ENCODE measurements at regions of chr6 and their contacts with region 1.

Region 1: DNA sequence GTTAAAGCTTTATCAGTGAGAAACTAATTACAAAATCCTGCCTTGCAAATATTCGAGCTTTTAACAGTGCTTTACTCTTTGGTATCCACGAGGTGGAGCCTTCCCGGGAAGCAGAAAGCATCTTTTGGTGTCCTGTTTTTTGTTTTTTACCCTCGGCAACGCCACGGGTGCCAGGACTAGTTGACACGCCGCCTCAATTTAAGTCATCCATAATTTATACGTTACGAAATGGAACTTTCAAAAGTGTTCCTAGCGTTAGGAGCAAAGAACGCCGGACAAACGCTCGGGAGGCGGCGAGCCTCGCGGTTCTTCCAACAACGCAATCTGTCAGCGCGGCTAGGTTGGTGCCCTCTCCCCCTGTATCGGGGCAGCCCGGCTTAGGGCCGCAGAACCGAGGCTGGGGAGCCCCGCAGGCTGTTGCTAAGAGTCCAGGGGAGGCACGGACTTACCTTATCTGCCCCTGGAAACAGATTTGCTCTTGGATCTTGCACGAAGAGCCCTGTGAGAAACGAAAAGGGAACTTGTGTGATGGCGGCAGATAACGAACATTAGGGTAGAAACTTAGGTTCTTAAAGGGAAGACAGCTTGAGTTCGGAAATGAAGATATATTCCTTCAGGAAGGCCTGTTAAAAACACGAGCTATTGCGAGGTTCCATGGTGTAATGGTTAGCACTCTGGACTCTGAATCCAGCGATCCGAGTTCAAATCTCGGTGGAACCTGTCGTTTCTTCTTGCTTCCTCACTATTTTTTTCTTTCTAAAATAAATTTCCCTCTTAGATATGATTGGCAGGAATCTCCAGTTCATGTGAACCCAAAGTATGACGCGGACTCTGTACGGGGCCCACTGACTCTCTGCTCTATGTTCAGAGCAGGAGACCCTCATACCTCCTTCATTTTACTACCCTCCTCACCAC is 46.2 kb upstream of the ZNF184 start:
- DNase-seq: peak; percentile 84
- H3K4me3 ChIP-seq: peak overlapping the region; percentile 79
- CTCF ChIP-seq: peak; percentile 79

Region 2: DNA sequence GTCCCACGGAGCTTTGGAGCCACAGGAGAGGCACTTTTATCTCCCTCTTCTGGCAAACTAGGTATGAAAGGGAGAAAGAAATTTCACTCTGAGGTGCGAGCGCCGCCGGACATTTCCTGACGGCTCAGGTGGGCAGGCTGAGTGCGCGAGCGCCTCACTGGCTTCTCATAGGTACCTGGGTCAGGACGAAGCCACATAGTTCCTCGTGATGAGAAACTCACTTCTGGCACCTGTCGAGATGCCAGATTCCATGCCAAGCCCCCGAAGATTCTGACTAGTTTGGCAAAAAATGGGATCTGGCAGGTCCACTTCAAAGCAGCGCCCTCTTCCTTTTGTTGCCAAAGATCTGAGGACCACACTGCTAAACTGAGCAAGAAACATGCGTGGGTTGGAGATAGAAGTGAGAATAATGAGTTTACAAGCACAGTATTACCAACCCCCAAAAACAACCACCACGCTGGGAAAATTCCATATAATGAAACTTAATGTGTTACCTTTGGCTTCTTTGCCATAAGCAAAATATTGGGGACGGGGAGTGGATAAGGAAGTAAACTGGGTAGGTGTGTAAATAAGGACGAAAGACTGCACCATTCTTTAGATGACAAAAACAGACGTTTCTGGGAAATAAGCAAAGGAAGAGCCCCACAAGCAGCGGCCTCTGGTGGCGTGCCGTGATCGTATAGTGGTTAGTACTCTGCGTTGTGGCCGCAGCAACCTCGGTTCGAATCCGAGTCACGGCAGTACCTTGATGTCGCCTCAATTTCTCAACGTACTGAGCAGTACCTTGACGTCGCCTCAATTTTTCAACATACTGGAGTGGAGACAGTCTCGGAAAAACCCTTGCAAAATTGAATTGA is 361.5 kb before region 1 on chr6:
- in situ Hi-C with region 1: loop called (anchors 25 kb)
- DNase-seq: no peak
- H3K4me3 ChIP-seq: peak overlapping the region; percentile 46
- CTCF ChIP-seq: peak; percentile 45

Region 3: GRCh38 chr6:27553123-27553904 is 34.2 kb after region 1 on chr6:
- in situ Hi-C with region 1: no loop called
- DNase-seq: no peak
- H3K4me3 ChIP-seq: peak overlapping the region; percentile 16
- CTCF ChIP-seq: no peak

Measured in astrocyte of the cerebellum (primary cell).